ENCODE measurements at regions of chr11 and their contacts with region 1.

Region 1: GRCh38 chr11:31870609-31871309 is 59.6 kb upstream of the PAX6 start:
- DNase-seq: peak; percentile 68 to 84
- H3K4me3 ChIP-seq: peak overlapping the region in 1 of 4 experiments; percentile 41; a peak in 2 of 8 replicates
- H3K27ac ChIP-seq: no peak overlapping the region
- H3K4me1 ChIP-seq: peaks cover 8 to 15% (median 8%) of the 10 kb centered on the region in 4 experiments; a peak in 6 of 7 replicates
- H3K27me3 ChIP-seq: peaks cover 0 to 11% (median 4%) of the 10 kb centered on the region in 4 experiments; a peak in 4 of 7 replicates
- CTCF ChIP-seq: peak; percentile 47 to 82 (median 73)
- EP300 ChIP-seq: no peak
- POLR2A ChIP-seq: no peak
- RAD21 ChIP-seq: peak; percentile 84 to 91

Region 2: GRCh38 chr11:31671681-31672080 is 199.1 kb before region 1 on chr11:
- CTCF ChIA-PET with region 1: no interaction called
- POLR2A ChIA-PET with region 1: no interaction called
- DNase-seq: no peak
- H3K4me3 ChIP-seq: no peak overlapping the region
- H3K27ac ChIP-seq: no peak overlapping the region
- H3K4me1 ChIP-seq: no peaks in the 10 kb centered on the region
- H3K27me3 ChIP-seq: peaks cover 0 to 1% (median 0%) of the 10 kb centered on the region in 4 experiments; a peak in 1 of 7 replicates
- CTCF ChIP-seq: no peak
- EP300 ChIP-seq: no peak
- POLR2A ChIP-seq: no peak
- RAD21 ChIP-seq: no peak

Region 3: DNA sequence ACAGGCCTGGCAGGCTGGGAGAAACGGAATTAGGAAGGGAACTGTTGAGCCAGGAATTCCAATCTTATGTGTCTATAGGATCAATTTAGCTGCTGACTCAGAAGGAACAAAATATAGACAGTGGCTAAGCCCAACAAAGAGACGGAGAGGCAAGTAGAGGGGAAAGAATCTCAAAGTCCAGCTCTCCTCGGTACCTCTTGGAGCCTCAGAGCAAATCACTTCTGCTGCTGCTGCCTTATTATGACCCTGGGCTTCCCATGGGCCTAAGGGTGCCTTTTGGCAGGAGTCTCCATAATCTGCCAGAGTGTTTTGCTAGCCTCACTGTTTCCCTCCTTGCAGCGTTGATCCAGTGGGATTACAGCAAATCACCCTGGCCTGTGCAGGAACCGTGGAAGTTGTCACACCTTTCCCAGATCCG is 91.4 kb before region 1 on chr11:
- CTCF ChIA-PET with region 1: no interaction called
- POLR2A ChIA-PET with region 1: no interaction called
- DNase-seq: no peak
- H3K4me3 ChIP-seq: no peak overlapping the region
- H3K27ac ChIP-seq: no peak overlapping the region
- H3K4me1 ChIP-seq: peaks cover 0 to 3% (median 2%) of the 10 kb centered on the region in 4 experiments; a peak in 1 of 7 replicates
- H3K27me3 ChIP-seq: no peaks in the 10 kb centered on the region
- CTCF ChIP-seq: no peak
- EP300 ChIP-seq: no peak
- POLR2A ChIP-seq: no peak
- RAD21 ChIP-seq: no peak

Region 4: GRCh38 chr11:31804312-31805036 is 66.3 kb before region 1 on chr11:
- CTCF ChIA-PET with region 1: interaction called, 12 read pairs
- POLR2A ChIA-PET with region 1: interaction called, 3 read pairs
- DNase-seq: peak in 1 of 2 experiments; percentile 74
- H3K4me3 ChIP-seq: peak overlapping the region; percentile 11 to 56 (median 38); a peak in 6 of 8 replicates
- H3K27ac ChIP-seq: no peak overlapping the region
- H3K4me1 ChIP-seq: peaks cover 26 to 47% (median 30%) of the 10 kb centered on the region in 4 experiments
- H3K27me3 ChIP-seq: peaks cover 91 to 100% (median 97%) of the 10 kb centered on the region in 4 experiments
- CTCF ChIP-seq: no peak
- EP300 ChIP-seq: no peak
- POLR2A ChIP-seq: no peak
- RAD21 ChIP-seq: no peak

Region 5: GRCh38 chr11:31817054-31817620 is 53.6 kb before region 1 on chr11:
- CTCF ChIA-PET with region 1: interaction called, 36 read pairs
- POLR2A ChIA-PET with region 1: no interaction called
- DNase-seq: peak in 1 of 2 experiments; percentile 64
- H3K4me3 ChIP-seq: peak overlapping the region in 3 of 4 experiments; percentile 35 to 62 (median 45); a peak in 5 of 8 replicates
- H3K27ac ChIP-seq: no peak overlapping the region
- H3K4me1 ChIP-seq: peaks cover 3 to 70% (median 47%) of the 10 kb centered on the region in 4 experiments
- H3K27me3 ChIP-seq: peaks cover 79 to 100% (median 98%) of the 10 kb centered on the region in 4 experiments
- CTCF ChIP-seq: no peak
- EP300 ChIP-seq: no peak
- POLR2A ChIP-seq: no peak
- RAD21 ChIP-seq: no peak

Region 6: GRCh38 chr11:31834237-31834636 is 36.5 kb before region 1 on chr11:
- CTCF ChIA-PET with region 1: interaction called, 27 read pairs
- POLR2A ChIA-PET with region 1: no interaction called
- DNase-seq: no peak
- H3K4me3 ChIP-seq: no peak overlapping the region
- H3K27ac ChIP-seq: no peak overlapping the region
- H3K4me1 ChIP-seq: peaks cover 0 to 2% (median 0%) of the 10 kb centered on the region in 4 experiments; a peak in 2 of 7 replicates
- H3K27me3 ChIP-seq: peaks cover 0 to 2% (median under 1%) of the 10 kb centered on the region in 4 experiments; a peak in 2 of 7 replicates
- CTCF ChIP-seq: peak; percentile 47 to 62 (median 59)
- EP300 ChIP-seq: no peak
- POLR2A ChIP-seq: no peak
- RAD21 ChIP-seq: peak; percentile 56 to 64

Region 7: DNA sequence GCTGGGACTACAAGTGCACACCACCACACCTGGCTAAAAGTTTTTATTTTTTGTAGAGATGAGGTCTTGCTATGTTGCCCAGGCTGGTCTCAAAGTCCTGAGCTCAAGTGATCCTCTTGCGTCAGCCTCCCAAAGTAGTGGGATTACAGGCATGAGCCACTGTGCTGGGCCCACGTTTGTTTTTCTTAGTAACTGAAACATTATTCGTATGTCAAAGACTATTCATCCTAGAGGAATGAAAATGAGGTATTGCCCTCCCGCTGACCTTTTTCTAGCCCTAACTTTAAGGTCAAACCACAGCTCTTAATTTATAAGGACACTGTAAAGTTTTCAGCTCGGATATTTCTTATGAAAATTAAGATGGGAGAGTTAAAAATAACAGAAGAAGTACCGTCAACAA is 26.4 kb before region 1 on chr11:
- CTCF ChIA-PET with region 1: interaction called, 14 read pairs
- POLR2A ChIA-PET with region 1: no interaction called
- DNase-seq: no peak
- H3K4me3 ChIP-seq: no peak overlapping the region
- H3K27ac ChIP-seq: no peak overlapping the region
- H3K4me1 ChIP-seq: peaks cover 0 to 5% (median 1%) of the 10 kb centered on the region in 4 experiments; a peak in 2 of 7 replicates
- H3K27me3 ChIP-seq: no peaks in the 10 kb centered on the region
- CTCF ChIP-seq: no peak
- EP300 ChIP-seq: no peak
- POLR2A ChIP-seq: no peak
- RAD21 ChIP-seq: no peak